Aorta (tissue), 5 donors: ENCODE measurements at regions of chr3 and their contacts with region 1.

Region 1: DNA sequence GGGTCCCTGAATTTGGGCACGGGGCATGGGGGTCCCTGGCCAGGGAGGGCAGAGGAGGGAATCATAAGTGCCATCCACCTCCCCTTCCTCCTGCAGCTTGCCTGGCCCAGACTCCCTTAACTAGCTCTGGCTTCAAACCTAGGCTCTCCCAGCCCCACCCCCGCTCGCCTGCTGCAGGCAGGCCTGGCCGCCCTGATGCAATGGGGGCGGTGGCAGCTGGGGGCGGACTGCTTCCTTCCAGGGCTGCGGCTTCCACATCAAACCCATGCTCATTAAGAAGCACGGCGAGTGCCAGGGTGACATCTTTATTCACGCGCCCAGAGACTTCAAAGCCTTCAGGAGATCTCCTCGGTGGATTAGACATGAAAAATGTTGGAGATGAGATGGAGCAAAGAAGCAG is 123.1 kb downstream of the TPRA1 start:
- DNase-seq: no peak
- ATAC-seq: no peak
- H3K4me3 ChIP-seq: no peak overlapping the region
- H3K27ac ChIP-seq: no peak overlapping the region
- H3K4me1 ChIP-seq: no peaks in the 10 kb centered on the region
- H3K27me3 ChIP-seq: no peaks in the 10 kb centered on the region

Region 2: DNA sequence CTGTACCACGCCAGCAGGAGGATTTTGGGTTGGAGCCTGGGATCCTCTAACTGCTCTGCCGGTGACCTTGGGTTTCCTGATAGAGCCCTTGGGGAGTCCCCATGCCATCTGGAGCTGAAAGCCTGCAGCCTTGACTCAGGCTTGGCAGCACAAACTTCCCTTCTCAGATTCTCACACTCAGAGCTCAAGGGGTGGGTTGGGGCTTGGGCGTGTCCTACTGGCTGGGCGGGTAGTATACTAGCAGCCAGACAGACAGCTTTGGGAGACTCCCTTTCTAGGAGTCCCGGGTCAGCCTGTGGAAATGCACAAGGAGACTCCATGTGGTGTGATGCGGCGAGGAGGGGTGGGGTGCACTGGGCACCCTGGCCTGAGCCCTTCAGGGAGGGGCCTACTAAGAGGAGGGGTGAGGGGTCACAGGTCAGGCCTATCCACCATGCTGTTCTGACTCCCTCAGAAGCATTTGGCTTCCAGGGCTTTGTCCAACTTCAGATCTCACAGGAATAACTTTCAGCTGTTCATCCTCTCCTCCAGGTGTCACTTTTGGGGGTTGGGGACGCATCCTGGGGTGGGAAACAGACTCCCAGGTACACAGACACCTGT is 506.1 kb before region 1 on chr3:
- intact Hi-C with region 1: loop called in 1 of 2 experiments (anchors 10 kb)
- DNase-seq: peak; percentile 89 to 93
- ATAC-seq: peak; percentile 78
- H3K4me3 ChIP-seq: no peak overlapping the region
- H3K27ac ChIP-seq: peak overlapping the region in 1 of 2 donors; percentile 2
- H3K4me1 ChIP-seq: peaks cover 0 to 2% of the 10 kb centered on the region in 2 donors
- H3K27me3 ChIP-seq: no peaks in the 10 kb centered on the region